ENCODE measurements at regions of chr1 and their contacts with region 1.

Region 1: DNA sequence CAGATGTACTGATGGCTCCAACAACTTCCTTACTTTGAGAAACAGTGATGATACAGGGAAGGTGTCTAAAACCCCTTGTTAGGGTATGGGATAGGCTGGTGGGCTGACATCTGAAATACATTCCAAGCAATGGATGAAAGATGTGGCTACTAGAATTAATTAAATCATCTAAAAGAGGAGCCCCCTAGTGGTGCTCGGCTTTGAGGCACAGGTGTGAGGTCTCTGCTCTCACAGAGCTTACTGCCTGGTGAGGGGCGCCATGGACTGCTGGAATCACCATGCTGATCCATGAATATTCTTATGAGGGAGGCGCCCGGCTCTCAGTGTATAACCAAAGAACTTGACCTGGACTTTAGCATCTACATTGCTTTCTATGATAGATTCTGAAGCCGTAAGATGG is 48.5 kb downstream of the GNG4 start:
- DNase-seq: no peak
- H3K4me3 ChIP-seq: no peak overlapping the region
- H3K4me3 Mint-ChIP-seq: no peak overlapping the region
- H3K27ac ChIP-seq: no peak overlapping the region
- H3K27ac Mint-ChIP-seq: no peak overlapping the region
- H3K4me1 ChIP-seq: no peaks in the 10 kb centered on the region
- H3K4me1 Mint-ChIP-seq: no peaks in the 10 kb centered on the region
- H3K27me3 ChIP-seq: no peaks in the 10 kb centered on the region
- H3K27me3 Mint-ChIP-seq: peaks cover 0 to 2% of the 10 kb centered on the region in 2 donors

Region 2: DNA sequence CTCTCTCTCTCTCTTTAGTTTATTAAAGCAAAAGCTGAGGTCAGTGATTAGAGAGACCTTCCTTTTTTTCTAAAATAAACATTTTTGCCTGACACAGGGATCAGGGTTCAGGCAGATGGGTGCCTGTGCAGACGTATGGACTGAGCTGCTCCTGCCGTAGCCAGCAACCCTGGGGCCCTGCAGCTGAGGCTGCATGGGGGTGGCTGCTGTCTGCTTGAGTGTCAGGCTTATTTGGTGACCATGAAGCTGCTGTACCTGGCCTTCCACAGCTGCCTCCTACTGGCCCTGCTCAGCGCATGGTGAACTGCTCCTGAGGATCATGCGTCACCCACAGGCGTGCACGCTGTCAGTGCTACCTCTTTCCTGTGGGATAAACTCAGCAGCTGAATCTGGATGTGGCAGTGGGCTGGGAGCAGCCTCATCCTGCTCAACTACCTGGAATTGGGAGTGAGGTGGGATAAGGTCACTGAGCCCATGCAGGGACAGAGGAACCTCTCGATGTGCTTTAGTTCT is 13.4 kb after region 1 on chr1:
- CTCF ChIA-PET with region 1: interaction called, 11 read pairs
- POLR2A ChIA-PET with region 1: interaction called, 5 read pairs
- DNase-seq: no peak
- H3K4me3 ChIP-seq: no peak overlapping the region
- H3K4me3 Mint-ChIP-seq: no peak overlapping the region
- H3K27ac ChIP-seq: no peak overlapping the region
- H3K27ac Mint-ChIP-seq: peak overlapping the region in 1 of 8 donors; percentile 74
- H3K4me1 ChIP-seq: no peaks in the 10 kb centered on the region
- H3K4me1 Mint-ChIP-seq: no peaks in the 10 kb centered on the region
- H3K27me3 ChIP-seq: no peaks in the 10 kb centered on the region
- H3K27me3 Mint-ChIP-seq: peaks cover 0 to 5% of the 10 kb centered on the region in 2 donors